Ascending aorta (tissue), 2 donors: ENCODE measurements at regions of chr17 and their contacts with region 1.

Region 1: GRCh38 chr17:12256380-12256995 is 235.8 kb downstream of the MAP2K4 start:
- DNase-seq: peak in 1 of 2 donors; percentile 70
- H3K4me3 ChIP-seq: peak overlapping the region in 1 of 2 donors; percentile 0
- H3K27ac ChIP-seq: no peak overlapping the region
- H3K4me1 ChIP-seq: peaks cover 0 to 10% of the 10 kb centered on the region in 2 donors
- H3K27me3 ChIP-seq: no peaks in the 10 kb centered on the region
- CTCF ChIP-seq: peak; percentile 62 to 87 (median 82)

Region 2: DNA sequence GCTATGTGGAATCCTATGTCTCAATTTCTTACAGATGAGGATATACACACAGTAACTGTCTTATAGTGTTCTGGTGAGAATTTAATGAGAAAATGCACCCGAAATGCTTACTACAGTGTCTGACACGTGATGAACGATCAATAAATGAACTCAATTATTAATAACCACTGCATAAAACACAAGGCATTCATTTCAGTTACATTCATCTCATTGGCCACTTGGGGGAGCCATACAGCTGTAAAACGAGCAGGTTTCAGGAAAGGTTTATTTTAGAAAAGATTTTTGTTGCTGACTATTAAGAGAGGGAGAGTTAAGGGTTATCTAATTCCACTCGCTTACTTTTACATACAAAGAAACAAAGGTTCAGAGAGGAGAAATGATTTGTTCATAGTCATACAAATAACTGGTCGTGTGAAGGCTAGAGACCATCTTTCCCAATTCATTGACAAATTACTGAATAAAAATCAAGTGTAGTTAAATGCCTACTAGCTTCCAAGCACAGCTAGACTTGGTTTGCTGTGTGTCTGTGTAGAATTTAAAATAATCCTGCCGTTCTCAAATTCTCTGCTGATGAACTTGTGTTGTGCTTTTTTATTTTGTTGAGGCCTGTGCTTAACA is 75.7 kb before region 1 on chr17:
- intact Hi-C with region 1: loop called (anchors 5 kb)
- DNase-seq: no peak
- H3K4me3 ChIP-seq: peak overlapping the region in 1 of 2 donors; percentile 28
- H3K27ac ChIP-seq: peak overlapping the region in 1 of 2 donors; percentile 58
- H3K4me1 ChIP-seq: peaks cover 0 to 5% of the 10 kb centered on the region in 2 donors
- H3K27me3 ChIP-seq: no peaks in the 10 kb centered on the region
- CTCF ChIP-seq: peak; percentile 58 to 79 (median 76)

Region 3: DNA sequence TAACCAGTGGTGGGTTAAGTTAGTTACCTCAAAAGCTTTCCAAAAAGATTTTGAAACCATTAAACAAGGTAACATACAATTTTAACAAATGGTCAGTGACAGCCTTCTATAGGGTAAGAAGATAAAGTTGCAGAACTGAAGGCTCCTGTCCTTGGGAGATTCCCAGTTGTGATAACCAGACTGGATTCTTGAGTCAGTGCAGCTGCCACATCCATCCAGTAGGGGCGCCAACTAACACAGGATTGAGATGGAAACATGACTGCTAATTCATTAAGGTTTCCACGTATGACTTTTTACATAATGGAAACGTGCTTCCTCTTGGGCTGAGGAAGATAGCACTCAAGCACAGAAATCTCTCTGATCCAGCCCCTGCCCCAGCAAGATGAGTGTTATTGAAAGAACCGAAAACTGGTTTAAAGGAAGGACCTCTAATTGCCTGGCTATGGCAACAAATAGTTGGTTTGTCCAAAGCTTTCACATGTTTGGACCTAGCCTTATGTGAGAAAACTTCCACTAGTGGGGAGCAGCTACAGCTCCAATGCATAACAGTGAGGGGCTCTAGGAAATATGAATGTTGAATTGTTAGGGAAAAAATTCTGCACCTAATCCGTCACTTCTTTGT is 139.4 kb after region 1 on chr17:
- intact Hi-C with region 1: no loop called
- DNase-seq: no peak
- H3K4me3 ChIP-seq: no peak overlapping the region
- H3K27ac ChIP-seq: no peak overlapping the region
- H3K4me1 ChIP-seq: peaks cover 0 to 12% of the 10 kb centered on the region in 2 donors
- H3K27me3 ChIP-seq: no peaks in the 10 kb centered on the region
- CTCF ChIP-seq: peak in 2 of 3 experiments; percentile 24 to 26

Region 4: GRCh38 chr17:12545877-12546513 is 289.5 kb after region 1 on chr17:
- intact Hi-C with region 1: loop called (anchors 2 kb)
- DNase-seq: no peak
- H3K4me3 ChIP-seq: no peak overlapping the region
- H3K27ac ChIP-seq: no peak overlapping the region
- H3K4me1 ChIP-seq: peaks cover 0 to 5% of the 10 kb centered on the region in 2 donors
- H3K27me3 ChIP-seq: no peaks in the 10 kb centered on the region
- CTCF ChIP-seq: peak; percentile 59 to 84 (median 78)

Region 5: DNA sequence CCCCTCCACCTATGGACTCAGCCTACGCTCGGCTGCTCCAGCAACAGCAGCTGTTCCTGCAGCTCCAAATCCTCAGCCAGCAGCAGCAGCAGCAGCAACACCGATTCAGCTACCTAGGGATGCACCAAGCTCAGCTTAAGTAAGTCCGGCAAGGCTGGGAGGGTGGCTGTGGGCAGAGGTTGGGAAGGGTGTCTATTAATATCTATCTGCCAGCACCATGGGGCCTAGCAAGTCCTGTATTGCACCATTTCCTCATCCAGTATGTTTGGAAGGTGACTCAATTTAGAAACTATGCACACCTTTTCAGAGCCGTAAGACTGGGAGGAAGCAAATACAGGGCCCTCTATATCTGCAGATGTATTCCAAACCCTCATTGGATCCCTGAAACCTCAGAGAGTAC is 487.8 kb after region 1 on chr17:
- intact Hi-C with region 1: loop called (anchors 2 kb)
- DNase-seq: no peak
- H3K4me3 ChIP-seq: no peak overlapping the region
- H3K27ac ChIP-seq: peak overlapping the region; percentile 46 to 49
- H3K4me1 ChIP-seq: peaks cover 0 to 11% of the 10 kb centered on the region in 2 donors
- H3K27me3 ChIP-seq: no peaks in the 10 kb centered on the region
- CTCF ChIP-seq: no peak

Region 6: DNA sequence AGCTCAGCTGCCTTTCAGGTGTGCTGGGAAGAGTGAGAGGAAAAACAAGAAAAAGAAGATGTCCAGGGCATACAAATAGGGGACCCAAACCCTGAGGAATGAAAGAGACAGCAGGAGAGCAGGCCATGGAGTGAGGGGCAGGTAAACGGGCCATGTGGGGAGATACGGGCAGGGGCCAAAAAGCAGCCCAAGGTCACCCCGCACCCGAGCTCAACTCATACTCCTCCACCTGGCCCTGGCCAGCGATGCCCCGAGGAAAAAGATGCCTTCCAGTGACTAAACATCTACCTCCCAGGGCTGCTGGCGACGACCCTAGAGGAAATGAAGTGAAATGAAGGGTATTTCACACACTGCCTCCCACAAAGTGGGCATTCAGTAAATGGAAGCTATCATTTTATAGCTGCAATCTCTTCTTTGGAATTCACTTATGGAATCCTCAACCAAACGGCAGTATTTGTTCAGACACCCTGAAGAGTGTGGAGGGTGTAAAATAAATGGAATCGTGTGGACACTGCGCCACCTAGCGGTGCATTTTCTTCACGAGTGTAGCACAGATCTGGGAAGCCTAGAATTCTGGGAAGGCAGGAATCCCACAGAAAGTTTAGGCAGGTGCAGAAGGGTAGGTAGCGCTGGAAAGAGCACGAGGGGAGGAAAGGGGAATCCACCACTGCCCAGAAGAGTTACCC is 746.4 kb after region 1 on chr17:
- intact Hi-C with region 1: loop called (anchors 5 kb)
- DNase-seq: peak in 1 of 2 donors; percentile 87
- H3K4me3 ChIP-seq: no peak overlapping the region
- H3K27ac ChIP-seq: no peak overlapping the region
- H3K4me1 ChIP-seq: no peaks in the 10 kb centered on the region
- H3K27me3 ChIP-seq: no peaks in the 10 kb centered on the region
- CTCF ChIP-seq: peak; percentile 72 to 90 (median 83)